Adrenal gland (tissue), 19 donors: ENCODE measurements at regions of chr18 and their contacts with region 1.

Region 1: GRCh38 chr18:23812546-23813440 is 123.5 kb downstream of the LAMA3 start:
- DNase-seq: no peak
- H3K4me3 ChIP-seq: no peak overlapping the region
- H3K27ac ChIP-seq: no peak overlapping the region
- H3K4me1 ChIP-seq: peaks cover 0 to 5% of the 10 kb centered on the region in 2 donors
- H3K27me3 ChIP-seq: no peaks in the 10 kb centered on the region
- CTCF ChIP-seq: peak; percentile 37 to 66 (median 57)
- POLR2A ChIP-seq: no peak

Region 2: DNA sequence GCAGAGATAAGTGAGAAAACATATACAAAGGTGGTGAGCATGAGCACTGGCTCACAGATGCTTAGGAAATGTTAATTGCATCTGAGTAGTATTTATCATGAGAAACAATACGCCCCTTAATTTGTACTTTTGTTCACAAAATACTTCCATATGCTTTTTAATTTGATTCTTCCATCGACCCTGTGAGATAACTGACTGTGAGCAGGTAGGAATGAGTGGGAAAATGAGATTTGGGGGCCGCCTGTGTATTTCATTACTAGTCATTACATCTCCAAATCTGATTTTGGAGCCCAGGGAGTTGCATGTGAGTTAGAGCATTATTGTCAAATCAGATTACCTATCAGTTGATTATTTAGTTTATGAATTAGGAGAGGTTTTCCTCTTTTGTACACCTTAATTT is 189.8 kb before region 1 on chr18:
- intact Hi-C with region 1: loop called (anchors 5 to 10 kb)
- DNase-seq: no peak
- H3K4me3 ChIP-seq: no peak overlapping the region
- H3K27ac ChIP-seq: no peak overlapping the region
- H3K4me1 ChIP-seq: peaks cover 4 to 8% of the 10 kb centered on the region in 2 donors
- H3K27me3 ChIP-seq: no peaks in the 10 kb centered on the region
- CTCF ChIP-seq: no peak
- POLR2A ChIP-seq: no peak

Region 3: GRCh38 chr18:23629444-23629946 is 183.3 kb before region 1 on chr18:
- intact Hi-C with region 1: loop called (anchors 5 to 10 kb)
- DNase-seq: no peak
- H3K4me3 ChIP-seq: no peak overlapping the region
- H3K27ac ChIP-seq: no peak overlapping the region
- H3K4me1 ChIP-seq: no peaks in the 10 kb centered on the region
- H3K27me3 ChIP-seq: no peaks in the 10 kb centered on the region
- CTCF ChIP-seq: no peak
- POLR2A ChIP-seq: no peak

Region 4: DNA sequence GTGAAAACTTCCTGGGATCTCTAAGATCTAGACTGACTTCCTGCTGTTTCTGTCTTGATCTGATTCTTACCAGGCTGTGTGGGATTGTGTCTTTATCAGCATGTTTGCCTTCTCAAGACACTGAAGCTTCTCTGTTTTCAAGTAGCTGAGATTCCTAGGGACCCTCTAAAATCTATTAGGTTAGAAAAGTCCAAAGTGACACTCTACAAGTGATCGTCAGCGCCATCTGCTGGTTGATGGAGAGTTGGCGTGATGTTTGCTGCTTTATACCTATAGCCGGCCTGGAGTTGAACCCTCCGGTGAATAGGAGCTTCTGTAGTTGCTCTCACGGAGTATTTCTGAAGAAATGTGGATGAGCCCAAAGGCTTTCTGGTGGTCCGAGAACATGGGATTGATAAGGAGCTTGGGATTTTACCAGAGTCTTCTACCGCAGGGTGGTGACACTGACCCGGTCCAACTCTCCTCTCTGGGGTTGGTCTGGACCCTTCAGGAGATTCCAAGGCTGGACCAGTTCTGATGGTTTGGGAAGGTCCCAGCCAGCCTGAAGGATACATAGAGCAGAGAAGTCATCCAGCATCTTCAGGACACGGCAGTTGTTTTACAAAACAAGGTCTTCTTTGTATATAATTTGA is 105.7 kb after region 1 on chr18:
- intact Hi-C with region 1: loop called in 1 of 2 experiments (anchors 10 kb)
- DNase-seq: peak; percentile 50 to 89 (median 74)
- H3K4me3 ChIP-seq: no peak overlapping the region
- H3K27ac ChIP-seq: no peak overlapping the region
- H3K4me1 ChIP-seq: no peaks in the 10 kb centered on the region
- H3K27me3 ChIP-seq: no peaks in the 10 kb centered on the region
- CTCF ChIP-seq: peak; percentile 55 to 85 (median 74)
- POLR2A ChIP-seq: no peak

Region 5: GRCh38 chr18:24118750-24119577 is 306.2 kb after region 1 on chr18:
- intact Hi-C with region 1: loop called in 1 of 2 experiments (anchors 10 kb)
- DNase-seq: peak; percentile 51 to 93 (median 80)
- H3K4me3 ChIP-seq: no peak overlapping the region
- H3K27ac ChIP-seq: no peak overlapping the region
- H3K4me1 ChIP-seq: peaks cover 19 to 24% of the 10 kb centered on the region in 2 donors
- H3K27me3 ChIP-seq: no peaks in the 10 kb centered on the region
- CTCF ChIP-seq: peak; percentile 88 to 98 (median 94)
- POLR2A ChIP-seq: no peak